WTC11 (cell line): ENCODE measurements at regions of chr1 and their contacts with region 1.

Region 1: DNA sequence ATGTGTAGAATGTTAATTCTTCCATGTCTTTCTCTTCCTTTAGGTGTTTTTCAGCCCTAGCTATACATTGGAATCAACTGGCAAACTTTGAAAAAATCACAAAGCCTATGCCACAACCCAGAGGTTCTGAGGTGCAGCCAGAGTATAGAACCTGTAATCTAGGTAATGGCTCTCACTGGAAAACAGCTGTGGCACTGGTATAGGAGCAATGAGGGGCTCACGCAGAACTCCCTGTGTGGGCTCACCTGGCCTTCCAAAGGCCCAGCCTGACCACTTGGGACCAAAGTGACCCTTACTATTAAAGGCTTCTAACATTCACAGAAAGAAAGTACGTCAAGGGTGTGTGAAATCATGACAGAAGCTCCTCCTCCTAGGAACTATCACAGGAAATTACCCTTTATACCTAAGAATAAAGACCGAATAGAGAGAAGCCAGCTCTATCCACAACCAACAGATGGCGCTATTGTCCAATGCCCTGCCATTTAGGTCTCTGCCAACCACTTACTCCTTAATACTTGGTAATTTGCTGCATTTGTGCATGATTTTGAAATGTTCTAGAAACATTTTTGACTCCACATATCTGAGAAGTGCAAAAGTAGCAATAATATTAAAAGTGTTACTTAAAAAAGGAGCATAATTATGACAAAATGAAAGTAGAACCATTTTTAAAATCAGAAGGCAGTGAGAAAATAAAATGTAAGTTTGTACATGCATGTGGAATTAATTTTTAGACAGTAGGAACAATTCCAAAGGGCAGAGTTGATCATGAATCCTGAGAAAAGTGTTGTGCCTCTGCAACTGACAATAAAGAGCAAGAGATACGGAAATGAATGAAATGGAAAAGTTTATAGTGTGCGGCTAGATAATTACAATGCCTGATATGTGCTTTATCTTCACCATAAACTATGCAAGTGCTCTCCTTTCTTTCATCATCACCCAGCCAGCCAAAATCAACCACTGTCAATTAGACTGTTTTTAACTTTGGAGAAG is 93.1 kb upstream of the HAO2 start:
- DNase-seq: peak; percentile 61
- ATAC-seq: peak; percentile 86
- H3K4me3 Mint-ChIP-seq: no peak overlapping the region
- H3K27ac Mint-ChIP-seq: no peak overlapping the region
- H3K4me1 Mint-ChIP-seq: peaks cover 11% of the 10 kb centered on the region
- H3K27me3 Mint-ChIP-seq: 0 out of 2 replicates have a peak, but pooled peaks cover 2% of the 10 kb centered on the region
- CTCF ChIP-seq: peak; percentile 80

Region 2: GRCh38 chr1:119140177-119141019 is 135.0 kb before region 1 on chr1 and contains the start of gene WARS2:
- CTCF ChIA-PET with region 1: interaction called, 26 read pairs
- POLR2A ChIA-PET with region 1: no interaction called
- DNase-seq: peak; percentile 94
- ATAC-seq: peak; percentile 96
- H3K4me3 Mint-ChIP-seq: no peak within 1 kb of the TSS
- H3K27ac Mint-ChIP-seq: no peak within 1 kb of the TSS
- H3K4me1 Mint-ChIP-seq: peaks cover 10% of the 10 kb centered on the region
- H3K27me3 Mint-ChIP-seq: no peaks in the 10 kb centered on the region
- CTCF ChIP-seq: no peak
- total RNA-seq, gene WARS2: 9.3 to 12.2 TPM (median 9.7 TPM) in 3 replicates

Region 3: DNA sequence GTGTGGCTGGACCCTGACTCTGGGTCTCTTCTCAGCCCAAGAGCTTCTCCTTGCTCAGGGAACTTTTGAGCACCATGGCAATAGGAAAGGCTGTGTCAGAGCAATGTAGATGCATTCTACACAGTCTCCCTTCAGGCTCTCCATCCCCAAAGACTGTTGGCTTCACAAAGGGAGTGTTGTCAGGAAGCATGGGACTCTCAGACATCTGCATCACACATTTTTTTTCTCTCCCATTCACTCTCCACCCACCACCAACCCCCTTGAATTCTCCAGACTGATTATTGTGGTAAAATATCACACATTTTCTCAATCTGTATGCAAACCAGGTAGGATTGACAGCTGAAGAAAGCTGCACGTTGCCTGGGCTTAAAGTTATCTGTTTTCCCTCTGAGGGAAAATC is 29.6 kb before region 1 on chr1:
- CTCF ChIA-PET with region 1: interaction called, 21 read pairs
- POLR2A ChIA-PET with region 1: no interaction called
- DNase-seq: no peak
- ATAC-seq: no peak
- H3K4me3 Mint-ChIP-seq: no peak overlapping the region
- H3K27ac Mint-ChIP-seq: no peak overlapping the region
- H3K4me1 Mint-ChIP-seq: no peaks in the 10 kb centered on the region
- H3K27me3 Mint-ChIP-seq: no peaks in the 10 kb centered on the region
- CTCF ChIP-seq: no peak

Region 4: DNA sequence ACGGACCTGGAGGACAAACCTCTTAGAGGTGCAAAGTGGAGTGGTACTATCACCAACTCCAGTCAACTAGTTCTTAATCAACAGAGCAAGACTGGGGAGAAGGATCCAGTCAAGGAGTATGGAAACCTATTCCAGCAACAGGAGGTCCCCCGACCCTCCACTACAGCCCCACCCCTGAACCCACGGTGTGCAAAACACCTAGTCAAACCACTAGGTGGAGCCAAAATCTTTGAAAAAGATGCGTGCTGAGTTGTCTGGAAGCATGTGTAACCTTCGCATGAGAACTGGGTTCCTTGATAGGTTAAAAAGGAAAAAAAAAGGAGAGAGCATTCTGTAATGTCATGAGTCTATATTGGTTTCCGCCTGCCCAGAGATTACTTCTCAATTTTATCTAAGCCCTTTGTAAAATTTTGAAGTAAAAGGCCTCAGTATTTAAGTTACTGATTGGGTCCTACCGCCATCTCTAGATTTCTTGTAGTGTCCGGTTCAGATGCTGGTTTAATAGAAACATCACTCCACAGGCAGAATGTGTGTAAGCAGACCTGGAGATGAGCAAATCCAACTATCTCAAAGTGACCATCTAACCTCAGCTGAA is 11.2 kb after region 1 on chr1:
- CTCF ChIA-PET with region 1: interaction called, 11 read pairs
- POLR2A ChIA-PET with region 1: no interaction called
- DNase-seq: peak; percentile 65
- ATAC-seq: peak; percentile 98
- H3K4me3 Mint-ChIP-seq: no peak overlapping the region
- H3K27ac Mint-ChIP-seq: no peak overlapping the region
- H3K4me1 Mint-ChIP-seq: peaks cover 22% of the 10 kb centered on the region
- H3K27me3 Mint-ChIP-seq: no peaks in the 10 kb centered on the region
- CTCF ChIP-seq: peak; percentile 69

Region 5: GRCh38 chr1:119318466-119319309 is 43.2 kb after region 1 on chr1:
- CTCF ChIA-PET with region 1: interaction called, 18 read pairs
- POLR2A ChIA-PET with region 1: no interaction called
- DNase-seq: no peak
- ATAC-seq: no peak
- H3K4me3 Mint-ChIP-seq: no peak overlapping the region
- H3K27ac Mint-ChIP-seq: no peak overlapping the region
- H3K4me1 Mint-ChIP-seq: peaks cover 34% of the 10 kb centered on the region
- H3K27me3 Mint-ChIP-seq: no peaks in the 10 kb centered on the region
- CTCF ChIP-seq: no peak

Region 6: GRCh38 chr1:119372490-119373086 is 97.1 kb after region 1 on chr1:
- CTCF ChIA-PET with region 1: interaction called, 30 read pairs
- POLR2A ChIA-PET with region 1: no interaction called
- DNase-seq: peak; percentile 69
- ATAC-seq: peak; percentile 93
- H3K4me3 Mint-ChIP-seq: no peak overlapping the region
- H3K27ac Mint-ChIP-seq: peak overlapping the region; percentile 3; the same call in 1 of the 2 replicates
- H3K4me1 Mint-ChIP-seq: peaks cover 36% of the 10 kb centered on the region
- H3K27me3 Mint-ChIP-seq: peaks cover 3% of the 10 kb centered on the region; the same call in 1 of the 2 replicates
- CTCF ChIP-seq: no peak

Region 7: GRCh38 chr1:119428991-119429390 is 153.6 kb after region 1 on chr1:
- CTCF ChIA-PET with region 1: no interaction called
- POLR2A ChIA-PET with region 1: no interaction called
- DNase-seq: no peak
- ATAC-seq: no peak
- H3K4me3 Mint-ChIP-seq: no peak overlapping the region
- H3K27ac Mint-ChIP-seq: no peak overlapping the region
- H3K4me1 Mint-ChIP-seq: peaks cover 13% of the 10 kb centered on the region
- H3K27me3 Mint-ChIP-seq: no peaks in the 10 kb centered on the region
- CTCF ChIP-seq: no peak